Naive thymus-derived CD4-positive, alpha-beta T cell (primary cell): ENCODE measurements at regions of chr6 and their contacts with region 1.

Region 1: GRCh38 chr6:137707590-137708360 is 159.3 kb upstream of the TNFAIP3 start:
- DNase-seq: peak; percentile 44 to 94 (median 89)
- ATAC-seq: peak; percentile 86
- H3K4me3 ChIP-seq: peak overlapping the region; percentile 6
- H3K4me3 Mint-ChIP-seq: peak overlapping the region in 9 of 10 donors; percentile 38 to 82 (median 66)
- H3K27ac ChIP-seq: peak overlapping the region; percentile 79
- H3K27ac Mint-ChIP-seq: peak overlapping the region; percentile 88 to 99 (median 97)
- H3K4me1 ChIP-seq: peaks cover 26 to 37% of the 10 kb centered on the region in 2 donors
- H3K4me1 Mint-ChIP-seq: peaks cover 23 to 74% (median 40%) of the 10 kb centered on the region in 7 donors
- H3K27me3 ChIP-seq: no peaks in the 10 kb centered on the region
- H3K27me3 Mint-ChIP-seq: peaks cover 0 to 5% (median 0%) of the 10 kb centered on the region in 5 donors

Region 2: DNA sequence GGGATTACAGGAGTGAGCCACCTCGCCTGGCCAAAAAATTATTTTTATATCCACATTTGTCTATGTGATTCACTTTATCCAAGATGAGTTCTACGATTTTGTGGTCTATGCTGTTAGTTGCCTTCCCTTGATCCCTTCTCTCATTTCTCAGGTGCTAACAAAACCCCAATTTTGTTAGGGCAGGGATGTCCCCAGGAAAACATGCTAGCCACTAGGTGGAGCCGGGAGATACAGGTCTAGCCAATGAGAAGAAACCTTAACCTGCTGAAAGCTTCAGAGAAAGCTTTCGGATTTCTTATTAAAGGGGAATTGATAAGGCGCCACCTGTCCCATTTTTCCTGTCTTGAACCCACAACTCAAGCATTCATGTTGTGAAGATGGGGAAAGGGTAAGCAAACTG is 46.2 kb before region 1 on chr6:
- CTCF ChIA-PET with region 1: no interaction called
- POLR2A ChIA-PET with region 1: no interaction called
- intact Hi-C with region 1: loop called in 1 of 2 experiments (anchors 1 kb)
- DNase-seq: peak in 5 of 9 donors; percentile 11 to 45 (median 28)
- ATAC-seq: no peak
- H3K4me3 ChIP-seq: no peak overlapping the region
- H3K4me3 Mint-ChIP-seq: no peak overlapping the region
- H3K27ac ChIP-seq: no peak overlapping the region
- H3K27ac Mint-ChIP-seq: no peak overlapping the region
- H3K4me1 ChIP-seq: peaks cover 0 to 4% of the 10 kb centered on the region in 2 donors
- H3K4me1 Mint-ChIP-seq: peaks cover 0 to 43% (median 0%) of the 10 kb centered on the region in 7 donors
- H3K27me3 ChIP-seq: no peaks in the 10 kb centered on the region
- H3K27me3 Mint-ChIP-seq: peaks cover 0 to 11% (median 0%) of the 10 kb centered on the region in 5 donors

Region 3: GRCh38 chr6:137799950-137800568 is 92.3 kb after region 1 on chr6:
- CTCF ChIA-PET with region 1: interaction called, 34 read pairs
- POLR2A ChIA-PET with region 1: interaction called, 20 read pairs
- intact Hi-C with region 1: loop called (anchors 1 kb)
- DNase-seq: peak in 7 of 9 donors; percentile 75 to 87 (median 81)
- ATAC-seq: peak; percentile 91
- H3K4me3 ChIP-seq: no peak overlapping the region
- H3K4me3 Mint-ChIP-seq: peak overlapping the region in 9 of 10 donors; percentile 0 to 71 (median 49)
- H3K27ac ChIP-seq: peak overlapping the region; percentile 50
- H3K27ac Mint-ChIP-seq: peak overlapping the region; percentile 70 to 97 (median 89)
- H3K4me1 ChIP-seq: peaks cover 15 to 47% of the 10 kb centered on the region in 2 donors
- H3K4me1 Mint-ChIP-seq: peaks cover 27 to 72% (median 64%) of the 10 kb centered on the region in 7 donors
- H3K27me3 ChIP-seq: no peaks in the 10 kb centered on the region
- H3K27me3 Mint-ChIP-seq: no peaks in the 10 kb centered on the region

Region 4: GRCh38 chr6:137873273-137873762 is 165.5 kb after region 1 on chr6:
- CTCF ChIA-PET with region 1: interaction called, 19 read pairs
- POLR2A ChIA-PET with region 1: interaction called, 20 read pairs
- intact Hi-C with region 1: no loop called
- DNase-seq: peak in 6 of 9 donors; percentile 12 to 81 (median 37)
- ATAC-seq: peak; percentile 54
- H3K4me3 ChIP-seq: peak overlapping the region; percentile 0
- H3K4me3 Mint-ChIP-seq: peak overlapping the region; percentile 60 to 98 (median 94)
- H3K27ac ChIP-seq: peak overlapping the region; percentile 99
- H3K27ac Mint-ChIP-seq: peak overlapping the region; percentile 61 to 99 (median 94)
- H3K4me1 ChIP-seq: peaks cover 38 to 49% of the 10 kb centered on the region in 2 donors
- H3K4me1 Mint-ChIP-seq: peaks cover 53 to 91% (median 78%) of the 10 kb centered on the region in 7 donors
- H3K27me3 ChIP-seq: no peaks in the 10 kb centered on the region
- H3K27me3 Mint-ChIP-seq: no peaks in the 10 kb centered on the region

Region 5: DNA sequence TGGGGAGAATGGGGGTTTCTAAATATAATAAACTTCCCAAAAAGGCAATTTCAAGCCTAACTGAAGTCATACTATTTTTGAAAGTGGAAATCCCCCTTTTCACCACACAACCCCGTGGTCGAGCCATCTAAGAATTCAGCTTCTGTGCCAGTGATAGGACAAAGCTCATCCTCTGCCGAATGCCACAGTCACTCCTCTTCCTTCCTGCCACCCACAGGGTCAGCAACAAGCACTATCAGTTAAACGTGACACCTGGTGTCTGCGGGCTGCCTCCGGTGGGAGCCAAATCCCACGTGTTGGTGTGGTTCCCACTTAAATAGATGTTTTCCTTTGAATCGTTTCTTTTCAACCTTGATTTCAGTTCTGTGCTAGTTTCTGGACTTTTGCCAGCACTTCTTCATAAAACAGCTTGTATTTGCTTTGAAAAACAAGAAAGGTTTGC is 220.0 kb after region 1 on chr6:
- CTCF ChIA-PET with region 1: no interaction called
- POLR2A ChIA-PET with region 1: no interaction called
- intact Hi-C with region 1: loop called in 1 of 2 experiments (anchors 5 kb)
- DNase-seq: peak; percentile 34 to 81 (median 74)
- ATAC-seq: peak; percentile 100
- H3K4me3 ChIP-seq: no peak overlapping the region
- H3K4me3 Mint-ChIP-seq: peak overlapping the region in 9 of 10 donors; percentile 60 to 87 (median 76)
- H3K27ac ChIP-seq: peak overlapping the region; percentile 46
- H3K27ac Mint-ChIP-seq: peak overlapping the region; percentile 15 to 93 (median 86)
- H3K4me1 ChIP-seq: peaks cover 19 to 25% of the 10 kb centered on the region in 2 donors
- H3K4me1 Mint-ChIP-seq: peaks cover 26 to 55% (median 41%) of the 10 kb centered on the region in 7 donors
- H3K27me3 ChIP-seq: no peaks in the 10 kb centered on the region
- H3K27me3 Mint-ChIP-seq: no peaks in the 10 kb centered on the region

Region 6: DNA sequence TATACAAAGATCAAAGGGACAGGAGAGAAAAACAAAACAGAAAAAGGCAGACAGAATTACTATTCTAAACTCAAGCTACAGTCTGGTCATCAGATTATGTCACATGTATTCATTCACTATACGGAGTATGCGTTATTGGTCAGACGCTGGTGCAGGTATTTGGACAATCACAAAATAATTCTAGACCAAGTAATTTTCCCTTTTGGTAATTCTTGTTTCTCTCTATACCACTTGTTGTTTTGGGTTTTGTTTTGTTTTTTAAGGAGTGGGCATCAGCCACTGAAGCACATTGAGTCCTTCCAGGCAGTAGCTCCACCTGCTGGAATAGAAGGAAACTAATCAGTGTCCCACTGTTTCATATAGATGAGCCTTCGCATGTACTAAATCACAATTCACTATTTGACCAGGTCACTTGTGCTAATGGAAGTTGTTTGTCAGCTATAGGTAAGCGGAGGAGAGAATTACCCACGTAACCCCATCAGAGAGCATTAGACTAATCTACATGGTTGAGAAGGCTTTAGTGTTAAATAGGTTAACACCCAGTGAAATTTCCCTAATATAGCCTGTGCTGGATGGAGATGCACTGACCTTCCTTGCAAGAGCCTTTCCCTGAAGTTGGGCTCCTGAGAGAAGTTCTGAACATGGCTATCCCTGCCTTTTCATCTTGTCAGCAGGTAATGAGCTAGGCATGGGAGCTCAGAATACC is 237.2 kb after region 1 on chr6:
- CTCF ChIA-PET with region 1: interaction called, 37 read pairs
- POLR2A ChIA-PET with region 1: interaction called, 4 read pairs
- intact Hi-C with region 1: loop called (anchors 1 kb)
- DNase-seq: peak in 6 of 9 donors; percentile 7 to 52 (median 39)
- ATAC-seq: peak; percentile 88
- H3K4me3 ChIP-seq: no peak overlapping the region
- H3K4me3 Mint-ChIP-seq: no peak overlapping the region
- H3K27ac ChIP-seq: no peak overlapping the region
- H3K27ac Mint-ChIP-seq: peak overlapping the region in 3 of 9 donors; percentile 45 to 76 (median 59)
- H3K4me1 ChIP-seq: peaks cover 1 to 7% of the 10 kb centered on the region in 2 donors
- H3K4me1 Mint-ChIP-seq: peaks cover 4 to 48% (median 18%) of the 10 kb centered on the region in 7 donors
- H3K27me3 ChIP-seq: no peaks in the 10 kb centered on the region
- H3K27me3 Mint-ChIP-seq: no peaks in the 10 kb centered on the region

Region 7: GRCh38 chr6:138109042-138109997 is 401.5 kb after region 1 on chr6:
- CTCF ChIA-PET with region 1: interaction called, 3 read pairs
- POLR2A ChIA-PET with region 1: no interaction called
- intact Hi-C with region 1: loop called (anchors 1 kb)
- DNase-seq: peak; percentile 47 to 77 (median 68)
- ATAC-seq: peak; percentile 84
- H3K4me3 ChIP-seq: no peak overlapping the region
- H3K4me3 Mint-ChIP-seq: peak overlapping the region in 4 of 10 donors; percentile 2 to 45 (median 7)
- H3K27ac ChIP-seq: no peak overlapping the region
- H3K27ac Mint-ChIP-seq: no peak overlapping the region
- H3K4me1 ChIP-seq: peaks cover 8 to 10% of the 10 kb centered on the region in 2 donors
- H3K4me1 Mint-ChIP-seq: peaks cover 14 to 27% (median 20%) of the 10 kb centered on the region in 7 donors
- H3K27me3 ChIP-seq: peaks cover 0 to 6% of the 10 kb centered on the region in 2 donors
- H3K27me3 Mint-ChIP-seq: peaks cover 34 to 56% (median 47%) of the 10 kb centered on the region in 5 donors